Activated naive CD4-positive, alpha-beta T cell treated with anti-CD3 and anti-CD28 coated beads for 36 hours (primary cell): ENCODE measurements at regions of chr2 and their contacts with region 1.

Region 1: GRCh38 chr2:161946489-161947107 is 127.4 kb downstream of the DPP4 start:
- DNase-seq: peak; percentile 38
- H3K4me3 Mint-ChIP-seq: no peak overlapping the region
- H3K27ac Mint-ChIP-seq: no peak overlapping the region
- H3K4me1 Mint-ChIP-seq: peaks cover 15% of the 10 kb centered on the region
- H3K27me3 Mint-ChIP-seq: no peaks in the 10 kb centered on the region

Region 2: GRCh38 chr2:161223139-161223732 is 723.4 kb before region 1 on chr2:
- CTCF ChIA-PET with region 1: interaction called, 3 read pairs
- intact Hi-C with region 1: loop called (anchors 5 kb)
- DNase-seq: peak; percentile 22
- H3K4me3 Mint-ChIP-seq: no peak overlapping the region
- H3K27ac Mint-ChIP-seq: no peak overlapping the region
- H3K4me1 Mint-ChIP-seq: no peaks in the 10 kb centered on the region
- H3K27me3 Mint-ChIP-seq: no peaks in the 10 kb centered on the region

Region 3: GRCh38 chr2:161426922-161427663 is 519.5 kb before region 1 on chr2:
- CTCF ChIA-PET with region 1: no interaction called
- intact Hi-C with region 1: loop called (anchors 2 kb)
- DNase-seq: peak; percentile 29
- H3K4me3 Mint-ChIP-seq: peak overlapping the region; percentile 56
- H3K27ac Mint-ChIP-seq: peak overlapping the region; percentile 31
- H3K4me1 Mint-ChIP-seq: peaks cover 29% of the 10 kb centered on the region
- H3K27me3 Mint-ChIP-seq: peaks cover 76% of the 10 kb centered on the region

Region 4: GRCh38 chr2:161576421-161576820 is 370.2 kb before region 1 on chr2:
- CTCF ChIA-PET with region 1: interaction called, 12 read pairs
- intact Hi-C with region 1: no loop called
- DNase-seq: peak; percentile 36
- H3K4me3 Mint-ChIP-seq: no peak overlapping the region
- H3K27ac Mint-ChIP-seq: no peak overlapping the region
- H3K4me1 Mint-ChIP-seq: no peaks in the 10 kb centered on the region
- H3K27me3 Mint-ChIP-seq: no peaks in the 10 kb centered on the region

Region 5: GRCh38 chr2:161586517-161587167 is 360.0 kb before region 1 on chr2:
- CTCF ChIA-PET with region 1: interaction called, 57 read pairs
- intact Hi-C with region 1: loop called (anchors 1 kb)
- DNase-seq: no peak
- H3K4me3 Mint-ChIP-seq: no peak overlapping the region
- H3K27ac Mint-ChIP-seq: no peak overlapping the region
- H3K4me1 Mint-ChIP-seq: no peaks in the 10 kb centered on the region
- H3K27me3 Mint-ChIP-seq: peaks cover 4% of the 10 kb centered on the region

Region 6: DNA sequence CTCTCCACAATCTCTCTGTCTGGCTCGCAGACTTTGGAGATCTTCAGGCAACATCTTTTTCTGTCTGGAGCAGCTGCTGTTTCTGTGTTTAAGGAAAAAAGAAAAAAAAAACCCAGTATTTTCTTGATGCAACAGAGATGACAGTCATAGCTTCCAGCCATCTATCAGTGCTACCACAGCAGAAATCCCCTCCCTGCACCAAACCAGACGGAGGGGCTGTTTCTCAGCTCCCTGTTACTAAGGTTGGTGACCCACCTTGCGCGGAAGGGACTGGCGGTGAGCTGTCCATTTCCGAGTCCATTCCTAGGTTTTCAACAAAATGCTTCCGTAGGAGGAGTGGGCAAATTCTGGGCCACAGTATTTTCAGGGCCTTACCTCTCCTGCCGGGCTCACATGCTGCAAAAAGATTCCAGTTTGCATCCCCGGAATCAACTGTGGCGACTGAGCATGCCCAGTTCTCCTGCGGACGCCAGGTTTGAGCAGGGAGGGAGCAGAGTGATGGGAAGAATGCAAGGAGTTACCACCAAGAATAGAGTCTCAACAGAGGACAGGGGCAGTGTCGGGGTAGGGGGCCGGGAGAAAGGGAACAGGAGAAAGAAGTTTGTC is 321.2 kb before region 1 on chr2:
- CTCF ChIA-PET with region 1: interaction called, 3 read pairs
- intact Hi-C with region 1: loop called (anchors 1 kb)
- DNase-seq: peak; percentile 14
- H3K4me3 Mint-ChIP-seq: peak overlapping the region; percentile 17
- H3K27ac Mint-ChIP-seq: no peak overlapping the region
- H3K4me1 Mint-ChIP-seq: peaks cover 18% of the 10 kb centered on the region
- H3K27me3 Mint-ChIP-seq: peaks cover 29% of the 10 kb centered on the region

Region 7: GRCh38 chr2:161981679-161982250 is 35.2 kb after region 1 on chr2:
- CTCF ChIA-PET with region 1: interaction called, 11 read pairs
- intact Hi-C with region 1: no loop called
- DNase-seq: no peak
- H3K4me3 Mint-ChIP-seq: no peak overlapping the region
- H3K27ac Mint-ChIP-seq: no peak overlapping the region
- H3K4me1 Mint-ChIP-seq: peaks cover 24% of the 10 kb centered on the region
- H3K27me3 Mint-ChIP-seq: no peaks in the 10 kb centered on the region

Region 8: GRCh38 chr2:162318328-162319180 is 372.0 kb after region 1 on chr2 and contains the start of gene IFIH1:
- CTCF ChIA-PET with region 1: no interaction called
- intact Hi-C with region 1: no loop called
- DNase-seq: peak; percentile 88
- H3K4me3 Mint-ChIP-seq: peak within 1 kb of the TSS; percentile 94
- H3K27ac Mint-ChIP-seq: peak within 1 kb of the TSS; percentile 98
- H3K4me1 Mint-ChIP-seq: peaks cover 52% of the 10 kb centered on the region
- H3K27me3 Mint-ChIP-seq: no peaks in the 10 kb centered on the region
- total RNA-seq, gene IFIH1: 33.8 to 34.6 TPM